ENCODE measurements at regions of chr6 and their contacts with region 1.

Region 1: GRCh38 chr6:36360241-36361054 is 23.8 kb upstream of the BNIP5 start:
- DNase-seq: peak; percentile 88
- H3K4me3 ChIP-seq: no peak overlapping the region
- H3K27ac ChIP-seq: no peak overlapping the region
- H3K4me1 ChIP-seq: peaks cover 0 to 17% (median 13%) of the 10 kb centered on the region in 4 donors
- H3K27me3 ChIP-seq: no peaks in the 10 kb centered on the region
- CTCF ChIP-seq: peak; percentile 69 to 86 (median 80)
- EP300 ChIP-seq: no peak
- POLR2A ChIP-seq: no peak

Region 2: DNA sequence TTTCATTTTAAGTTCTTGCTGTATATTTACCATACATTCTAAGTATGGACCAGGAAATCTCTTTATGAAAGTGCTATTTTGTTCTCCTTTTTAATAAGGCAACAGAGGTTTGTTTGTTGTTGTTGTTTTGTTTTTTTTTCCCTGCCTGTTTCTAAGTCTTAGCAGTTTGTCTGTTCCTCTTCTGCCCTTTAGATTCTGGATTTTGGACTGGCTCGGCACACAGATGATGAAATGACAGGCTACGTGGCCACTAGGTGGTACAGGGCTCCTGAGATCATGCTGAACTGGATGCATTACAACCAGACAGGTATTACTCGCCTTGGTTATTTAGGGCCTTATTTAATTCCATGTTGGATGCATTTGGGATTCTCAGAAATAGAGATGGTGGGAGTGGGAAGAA is 284.8 kb before region 1 on chr6:
- intact Hi-C with region 1: no loop called
- DNase-seq: no peak
- H3K4me3 ChIP-seq: no peak overlapping the region
- H3K27ac ChIP-seq: peak overlapping the region in 2 of 4 donors; percentile 5 to 39
- H3K4me1 ChIP-seq: peaks cover 0 to 37% (median 30%) of the 10 kb centered on the region in 4 donors
- H3K27me3 ChIP-seq: no peaks in the 10 kb centered on the region
- CTCF ChIP-seq: peak in 1 of 4 experiments; percentile 6
- EP300 ChIP-seq: no peak
- POLR2A ChIP-seq: no peak

Region 3: GRCh38 chr6:36123257-36124139 is 236.9 kb before region 1 on chr6:
- intact Hi-C with region 1: loop called (anchors 5 kb)
- DNase-seq: peak; percentile 91
- H3K4me3 ChIP-seq: peak overlapping the region in 1 of 4 donors; percentile 22
- H3K27ac ChIP-seq: no peak overlapping the region
- H3K4me1 ChIP-seq: peaks cover 0 to 14% (median 12%) of the 10 kb centered on the region in 4 donors
- H3K27me3 ChIP-seq: peaks cover 0 to 17% (median under 1%) of the 10 kb centered on the region in 3 donors
- CTCF ChIP-seq: peak; percentile 51 to 83 (median 62)
- EP300 ChIP-seq: no peak
- POLR2A ChIP-seq: no peak

Region 4: DNA sequence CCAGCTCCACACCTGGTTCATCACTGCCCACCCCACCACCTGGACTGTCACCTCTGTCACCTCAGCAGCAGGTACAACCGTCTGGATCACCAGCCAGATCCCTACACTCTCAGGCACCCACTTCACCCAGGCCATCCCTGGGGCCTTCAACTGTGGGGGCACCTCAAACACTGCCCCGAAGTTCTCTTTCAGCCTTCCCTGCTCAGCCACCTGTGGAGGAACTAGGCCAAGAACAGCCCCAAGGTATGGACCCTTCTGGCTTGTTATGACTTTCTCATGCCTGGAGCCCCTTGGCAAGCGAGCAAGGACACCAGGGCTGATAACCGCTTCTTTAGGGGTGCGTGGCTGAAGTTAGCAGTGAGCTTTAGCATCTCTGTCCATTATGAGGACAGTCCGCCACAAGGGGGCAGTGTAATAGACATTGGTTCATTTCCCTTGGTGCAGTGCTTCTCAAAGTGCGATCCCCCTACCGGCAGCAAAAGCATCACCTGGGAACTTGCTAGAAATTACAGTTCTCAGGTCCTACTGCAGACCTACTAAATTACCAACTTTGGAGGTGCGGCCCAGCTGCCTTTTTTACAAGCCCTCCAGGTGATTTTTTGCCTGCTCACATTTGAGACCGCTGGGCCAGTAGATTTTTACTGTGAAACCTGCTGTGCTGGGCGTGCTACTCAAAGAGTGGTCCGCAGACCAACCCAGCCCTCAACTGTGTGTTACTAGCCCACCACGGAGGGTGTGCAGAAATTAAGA is 58.0 kb before region 1 on chr6:
- intact Hi-C with region 1: loop called (anchors 2 kb)
- DNase-seq: peak; percentile 90
- H3K4me3 ChIP-seq: no peak overlapping the region
- H3K27ac ChIP-seq: no peak overlapping the region
- H3K4me1 ChIP-seq: no peaks in the 10 kb centered on the region
- H3K27me3 ChIP-seq: peaks cover 0 to 13% (median 3%) of the 10 kb centered on the region in 3 donors
- CTCF ChIP-seq: peak; percentile 55 to 92 (median 84)
- EP300 ChIP-seq: no peak
- POLR2A ChIP-seq: no peak

Region 5: DNA sequence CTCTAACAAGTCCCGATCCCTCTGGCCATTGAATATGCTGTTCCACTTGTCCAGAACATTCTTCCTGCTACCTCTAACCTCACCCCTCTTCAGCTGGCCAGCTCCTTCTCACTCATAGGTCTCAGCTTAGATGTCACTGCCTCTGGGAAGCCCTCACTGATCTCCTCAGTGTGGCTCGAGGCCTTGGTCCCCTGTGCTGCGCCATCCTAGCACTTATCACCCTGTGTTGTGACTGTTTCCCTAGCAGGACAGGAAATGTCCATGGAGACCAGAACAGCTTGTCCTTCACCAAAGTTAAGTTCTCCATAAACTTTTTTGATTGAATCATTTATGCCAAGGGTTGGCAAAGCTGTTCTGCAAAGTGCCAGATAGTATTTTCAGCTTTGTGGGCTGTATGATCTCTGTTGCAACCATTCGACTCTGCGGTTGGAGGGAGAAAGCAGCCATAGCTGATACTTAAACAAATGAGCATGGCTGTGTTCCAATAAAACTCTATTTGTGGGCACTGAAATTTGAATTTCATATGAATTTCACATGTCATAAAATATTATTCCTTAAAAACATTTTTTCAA is 17.3 kb before region 1 on chr6:
- intact Hi-C with region 1: loop called (anchors 2 kb)
- DNase-seq: peak; percentile 11
- H3K4me3 ChIP-seq: no peak overlapping the region
- H3K27ac ChIP-seq: no peak overlapping the region
- H3K4me1 ChIP-seq: peaks cover 0 to 17% (median 5%) of the 10 kb centered on the region in 4 donors
- H3K27me3 ChIP-seq: no peaks in the 10 kb centered on the region
- CTCF ChIP-seq: no peak
- EP300 ChIP-seq: no peak
- POLR2A ChIP-seq: no peak

Region 6: GRCh38 chr6:36392621-36393020 is 32.2 kb after region 1 on chr6:
- intact Hi-C with region 1: no loop called
- DNase-seq: no peak
- H3K4me3 ChIP-seq: no peak overlapping the region
- H3K27ac ChIP-seq: no peak overlapping the region
- H3K4me1 ChIP-seq: peaks cover 0 to 6% (median 3%) of the 10 kb centered on the region in 4 donors
- H3K27me3 ChIP-seq: no peaks in the 10 kb centered on the region
- CTCF ChIP-seq: no peak
- EP300 ChIP-seq: no peak
- POLR2A ChIP-seq: no peak

Measured in sigmoid colon (tissue), 7 donors.